ENCODE measurements at regions of chr15 and their contacts with region 1.

Region 1: DNA sequence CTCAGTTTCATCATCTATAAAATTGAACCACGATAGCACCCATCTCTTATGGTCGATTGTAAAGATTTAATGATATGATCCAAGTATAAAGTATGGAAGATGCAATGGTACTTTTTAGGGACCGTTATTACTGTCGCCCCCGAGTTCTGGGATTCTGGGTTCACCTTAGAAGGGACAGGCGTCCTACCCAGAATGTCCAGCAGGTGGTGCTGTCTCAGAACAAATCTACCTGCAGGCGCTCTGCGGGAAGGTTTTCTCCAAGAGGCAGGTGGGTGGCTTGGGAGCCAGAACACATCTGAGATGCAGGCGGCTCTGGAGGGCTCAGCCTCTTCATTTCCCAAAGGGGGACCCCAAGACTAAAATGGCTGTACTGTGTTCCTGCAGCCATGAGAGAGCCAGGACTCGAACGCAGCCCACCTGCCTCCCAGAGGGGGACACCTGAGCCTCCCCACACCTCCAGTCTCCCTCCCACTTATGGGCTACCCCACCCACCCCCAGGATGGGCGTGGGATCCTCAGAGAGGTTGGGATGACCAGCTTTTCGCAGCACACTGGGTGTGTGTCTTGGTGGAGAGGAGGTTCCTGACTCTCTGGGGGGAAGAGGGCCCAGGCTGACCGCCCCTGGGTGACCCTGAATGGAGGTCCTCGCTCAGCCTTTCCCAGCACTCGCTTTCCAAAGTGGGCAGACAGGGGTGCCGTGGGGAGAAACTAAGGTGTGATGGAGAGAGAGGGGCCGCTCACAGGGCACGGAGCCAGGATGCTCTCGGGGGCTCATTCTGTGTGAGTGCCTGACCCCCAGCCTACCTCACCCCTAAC is 28.1 kb upstream of the CORO2B start:
- DNase-seq: peak; percentile 66 to 71
- ATAC-seq: peak; percentile 41 to 68; a peak in 4 of 6 replicates
- H3K4me3 ChIP-seq: no peak overlapping the region
- H3K27ac ChIP-seq: peak overlapping the region; percentile 51 to 64; a peak in 5 of 6 replicates
- H3K4me1 ChIP-seq: peaks cover 26% of the 10 kb centered on the region
- CTCF ChIP-seq: peak; percentile 97
- EP300 ChIP-seq: no peak
- POLR2A ChIP-seq: no peak
- RAD21 ChIP-seq: peak; percentile 79 to 85

Region 2: DNA sequence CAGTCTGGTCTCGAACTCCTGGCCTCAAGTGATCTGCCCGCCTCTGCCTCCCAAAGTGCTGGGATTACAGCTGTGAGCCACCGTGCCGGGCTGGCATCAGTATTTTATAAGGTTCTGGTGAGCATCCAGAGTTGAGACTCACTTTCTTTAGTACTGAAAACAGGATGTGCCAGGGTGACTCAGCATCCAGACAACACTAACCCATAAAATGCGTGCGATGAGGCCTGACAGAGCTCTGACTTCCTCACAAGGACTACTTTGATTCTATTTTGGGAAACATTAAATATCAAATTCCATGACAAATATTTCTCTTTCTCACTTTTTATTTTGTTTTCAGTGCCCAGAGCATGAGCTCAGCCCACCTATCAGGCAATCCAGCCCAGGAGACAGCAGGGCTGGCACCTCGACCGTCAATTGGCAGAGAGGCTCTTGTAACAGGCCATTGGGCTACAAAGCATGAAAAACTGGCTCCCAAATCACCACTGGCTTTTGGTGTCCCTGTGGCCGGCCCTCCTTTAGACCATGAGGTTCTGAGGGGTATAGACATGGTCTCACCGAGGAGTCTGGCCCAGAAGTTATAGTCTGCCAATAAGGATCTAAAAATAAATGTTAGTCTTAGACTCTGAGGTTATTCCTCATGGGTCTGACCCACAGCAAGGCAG is 198.2 kb before region 1 on chr15:
- CTCF ChIA-PET with region 1: interaction called, 15 read pairs
- POLR2A ChIA-PET with region 1: no interaction called
- DNase-seq: peak; percentile 53 to 89
- ATAC-seq: peak; percentile 83 to 86
- H3K4me3 ChIP-seq: no peak overlapping the region
- H3K27ac ChIP-seq: peak overlapping the region; percentile 75 to 84
- H3K4me1 ChIP-seq: peaks cover 42% of the 10 kb centered on the region
- CTCF ChIP-seq: no peak
- EP300 ChIP-seq: peak; percentile 58 to 65; a peak in 2 of 5 replicates
- POLR2A ChIP-seq: no peak
- RAD21 ChIP-seq: peak in 1 of 2 experiments; percentile 43; a peak in 2 of 5 replicates

Region 3: DNA sequence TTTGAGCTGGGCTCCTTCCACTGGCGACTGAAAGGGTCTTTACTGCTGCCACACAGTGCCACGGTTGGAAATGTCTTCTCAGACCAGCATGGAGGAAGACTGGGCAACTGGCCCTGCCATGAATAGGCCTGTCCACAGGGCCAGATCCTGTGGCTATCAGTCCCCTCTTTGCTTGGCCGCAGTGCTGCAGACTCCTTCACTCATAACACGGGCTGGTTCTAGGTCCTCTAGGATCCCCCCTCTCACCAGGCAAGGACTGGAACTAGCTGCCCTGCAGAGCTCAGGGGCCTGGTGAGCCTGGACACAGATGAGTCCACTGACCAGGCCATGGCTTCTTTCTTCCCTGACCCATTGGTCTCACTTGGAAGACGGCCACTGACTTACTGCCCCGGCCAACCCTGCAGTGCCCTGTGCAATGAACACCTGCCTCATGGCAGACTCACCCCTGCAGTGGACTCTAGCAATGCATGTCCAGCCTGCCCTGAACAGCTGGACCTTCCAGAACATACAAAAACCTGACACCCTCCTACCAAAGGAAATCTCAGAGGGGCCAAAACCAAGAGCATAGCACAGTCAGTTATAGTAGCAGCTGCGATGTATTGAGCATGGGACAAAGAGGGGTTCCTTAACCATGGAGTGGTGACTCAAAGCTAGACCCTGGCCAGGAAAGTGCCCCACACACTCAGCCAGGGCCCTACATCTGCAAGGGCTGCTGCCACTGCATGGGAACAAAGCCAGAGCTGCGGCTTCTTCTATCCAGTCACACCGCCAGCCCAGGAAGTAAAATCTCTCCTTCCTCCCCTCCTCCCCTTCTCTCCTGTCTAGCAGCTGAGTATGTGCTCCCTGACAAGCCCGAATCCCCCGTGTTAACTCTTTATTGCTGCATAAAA is 46.7 kb before region 1 on chr15:
- CTCF ChIA-PET with region 1: interaction called, 14 read pairs
- POLR2A ChIA-PET with region 1: no interaction called
- DNase-seq: no peak
- ATAC-seq: no peak
- H3K4me3 ChIP-seq: no peak overlapping the region
- H3K27ac ChIP-seq: peak overlapping the region in 1 of 2 experiments; percentile 22; a peak in 2 of 6 replicates
- H3K4me1 ChIP-seq: peaks cover 13% of the 10 kb centered on the region
- CTCF ChIP-seq: no peak
- EP300 ChIP-seq: no peak
- POLR2A ChIP-seq: no peak
- RAD21 ChIP-seq: no peak

Region 4: GRCh38 chr15:68578174-68578979 is 27.7 kb after region 1 on chr15:
- CTCF ChIA-PET with region 1: interaction called, 413 read pairs
- POLR2A ChIA-PET with region 1: no interaction called
- DNase-seq: peak in 1 of 2 experiments; percentile 47
- ATAC-seq: peak; percentile 54 to 71
- H3K4me3 ChIP-seq: peak overlapping the region; percentile 63
- H3K27ac ChIP-seq: peak overlapping the region; percentile 67 to 81
- H3K4me1 ChIP-seq: 0 out of 3 replicates have a peak, but pooled peaks cover 4% of the 10 kb centered on the region
- CTCF ChIP-seq: peak; percentile 35; the same call in 2 of the 3 replicates
- EP300 ChIP-seq: no peak
- POLR2A ChIP-seq: no peak; the same call in 1 of the 2 replicates
- RAD21 ChIP-seq: peak in 1 of 2 experiments; percentile 43; a peak in 3 of 5 replicates

Region 5: DNA sequence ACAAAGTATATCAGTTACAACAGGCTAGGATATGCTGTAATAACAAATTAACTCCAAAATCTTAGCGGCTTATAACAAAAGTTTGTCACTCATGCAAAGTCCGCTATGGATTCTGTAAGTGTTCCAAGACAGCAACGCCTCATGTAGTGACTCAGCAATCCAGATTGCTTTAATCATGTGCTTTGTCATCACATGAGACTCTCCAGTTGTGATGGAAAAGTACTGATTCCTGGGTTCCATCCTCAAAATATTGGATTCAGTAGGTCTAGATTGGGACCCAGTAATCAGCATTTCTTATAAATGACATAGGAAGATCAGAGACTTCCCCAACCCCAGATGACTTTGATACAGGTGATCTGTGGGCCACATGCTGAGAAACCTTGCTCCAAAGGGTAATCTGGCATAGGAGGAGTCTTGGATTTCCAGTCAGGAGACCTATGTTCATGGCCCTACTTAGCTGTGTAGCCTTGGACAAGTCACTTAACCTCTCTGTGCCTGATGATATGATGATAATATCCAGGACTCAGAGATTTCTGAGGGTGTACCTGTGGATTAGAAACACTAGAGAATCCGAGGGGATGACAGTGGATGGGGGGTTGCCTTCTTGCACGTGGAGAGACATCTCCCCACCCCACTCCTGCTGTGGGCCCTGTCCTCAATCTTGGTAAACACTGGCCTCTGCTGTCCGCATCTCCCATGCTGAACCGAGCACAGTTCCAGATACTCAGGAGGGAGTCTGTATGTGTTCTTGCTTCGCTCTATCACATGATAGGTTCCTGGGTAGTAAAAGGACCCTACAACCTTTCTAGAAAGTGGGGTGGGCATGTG is 93.6 kb after region 1 on chr15:
- CTCF ChIA-PET with region 1: interaction called, 110 read pairs
- POLR2A ChIA-PET with region 1: no interaction called
- DNase-seq: peak; percentile 48 to 71
- ATAC-seq: no peak
- H3K4me3 ChIP-seq: no peak overlapping the region
- H3K27ac ChIP-seq: peak overlapping the region; percentile 54 to 71
- H3K4me1 ChIP-seq: peaks cover 29% of the 10 kb centered on the region
- CTCF ChIP-seq: no peak
- EP300 ChIP-seq: no peak
- POLR2A ChIP-seq: no peak
- RAD21 ChIP-seq: no peak

Measured in A549 (cell line).